ENCODE measurements at regions of chr5 and their contacts with region 1.

Region 1: DNA sequence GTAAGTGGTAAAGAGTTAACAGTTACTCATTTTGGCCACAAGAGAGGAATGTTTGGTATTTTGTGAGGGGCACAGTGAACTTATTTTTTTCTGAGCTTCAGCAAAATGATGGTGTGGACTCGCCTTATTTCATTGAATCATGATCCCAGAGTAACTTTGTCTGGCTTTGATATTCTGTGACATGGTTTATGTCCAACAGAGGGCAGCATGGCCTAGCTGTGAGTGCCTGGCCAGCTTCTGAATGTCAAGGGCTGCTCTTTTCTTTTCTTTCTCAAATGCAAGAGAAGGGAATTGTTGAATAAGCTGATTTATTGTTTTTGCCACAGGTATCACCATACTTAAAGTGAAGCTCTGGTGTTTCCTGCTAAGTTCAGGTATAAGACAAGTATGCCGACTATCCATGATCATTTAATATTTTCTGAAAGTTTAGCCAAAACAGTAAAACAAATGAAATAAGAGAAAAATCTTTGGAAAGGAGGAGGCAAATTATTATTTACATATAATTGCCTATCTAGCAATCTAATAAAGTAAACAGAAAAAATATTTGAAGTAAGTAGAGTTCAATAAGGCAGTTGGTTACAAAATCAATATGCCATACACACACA is 31.7 kb downstream of the MRPL22 start:
- DNase-seq: peak; percentile 13
- H3K4me3 Mint-ChIP-seq: no peak overlapping the region
- H3K27ac Mint-ChIP-seq: no peak overlapping the region
- H3K4me1 Mint-ChIP-seq: peaks cover 2% of the 10 kb centered on the region
- H3K27me3 Mint-ChIP-seq: no peaks in the 10 kb centered on the region

Region 2: GRCh38 chr5:154962494-154962893 is 10.1 kb before region 1 on chr5:
- CTCF ChIA-PET with region 1: interaction called, 15 read pairs
- POLR2A ChIA-PET with region 1: no interaction called
- DNase-seq: no peak
- H3K4me3 Mint-ChIP-seq: no peak overlapping the region
- H3K27ac Mint-ChIP-seq: no peak overlapping the region
- H3K4me1 Mint-ChIP-seq: peaks cover 3% of the 10 kb centered on the region
- H3K27me3 Mint-ChIP-seq: no peaks in the 10 kb centered on the region